Gastrocnemius medialis (tissue), 4 donors: ENCODE measurements at regions of chr16 and their contacts with region 1.

Region 1: DNA sequence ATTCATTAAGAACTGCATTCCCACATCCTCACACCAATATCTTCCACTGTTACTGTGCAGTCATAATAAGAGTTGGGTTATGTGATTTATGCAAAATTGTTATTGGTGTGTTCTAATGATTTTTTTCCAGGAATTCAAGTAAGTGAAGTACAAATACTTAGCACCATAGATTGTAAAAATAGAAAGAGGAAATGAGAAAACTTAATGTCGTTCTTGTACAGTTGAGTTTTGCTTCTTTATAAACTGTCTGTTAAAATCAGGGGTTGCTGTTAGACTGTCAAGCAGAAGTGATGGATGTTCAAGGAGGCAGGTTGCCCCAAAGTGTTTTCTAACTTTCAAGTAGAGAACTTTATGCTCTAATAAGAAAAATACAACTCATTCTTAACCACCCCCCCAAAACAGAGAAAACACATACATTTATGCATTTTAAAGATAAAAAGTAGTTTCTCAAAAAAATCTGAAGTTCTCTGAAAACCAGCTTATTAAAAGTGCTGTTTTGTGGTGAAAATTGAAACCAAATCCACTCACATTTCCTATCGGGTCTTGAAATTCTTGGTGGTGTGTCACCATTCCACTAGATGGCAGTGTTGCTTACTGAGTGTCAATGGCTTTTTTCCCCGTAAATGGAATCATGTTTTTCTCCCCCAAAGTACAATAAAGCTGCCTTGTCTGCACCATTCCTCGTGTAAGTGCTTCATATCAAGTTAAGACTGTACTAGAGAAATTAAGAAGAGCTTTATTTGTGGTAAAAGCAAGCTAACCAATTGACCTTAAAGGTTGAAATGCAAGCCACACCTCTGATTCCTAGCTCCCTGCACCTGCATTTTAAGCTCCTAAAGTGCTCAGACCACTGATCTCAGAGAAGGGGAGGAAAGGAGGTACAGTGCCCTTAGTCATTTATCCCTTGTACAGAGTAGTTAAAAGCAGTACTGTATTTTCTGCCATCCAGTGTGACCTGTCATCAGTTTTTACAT is 4.7 kb upstream of the IGSF6 start:
- DNase-seq: no peak
- ATAC-seq: no peak
- H3K4me3 ChIP-seq: no peak overlapping the region
- H3K27ac ChIP-seq: no peak overlapping the region
- H3K4me1 ChIP-seq: peaks cover 6 to 7% of the 10 kb centered on the region in 2 donors
- H3K27me3 ChIP-seq: no peaks in the 10 kb centered on the region
- CTCF ChIP-seq: peak; percentile 19 to 83 (median 55)
- POLR2A ChIP-seq: no peak

Region 2: DNA sequence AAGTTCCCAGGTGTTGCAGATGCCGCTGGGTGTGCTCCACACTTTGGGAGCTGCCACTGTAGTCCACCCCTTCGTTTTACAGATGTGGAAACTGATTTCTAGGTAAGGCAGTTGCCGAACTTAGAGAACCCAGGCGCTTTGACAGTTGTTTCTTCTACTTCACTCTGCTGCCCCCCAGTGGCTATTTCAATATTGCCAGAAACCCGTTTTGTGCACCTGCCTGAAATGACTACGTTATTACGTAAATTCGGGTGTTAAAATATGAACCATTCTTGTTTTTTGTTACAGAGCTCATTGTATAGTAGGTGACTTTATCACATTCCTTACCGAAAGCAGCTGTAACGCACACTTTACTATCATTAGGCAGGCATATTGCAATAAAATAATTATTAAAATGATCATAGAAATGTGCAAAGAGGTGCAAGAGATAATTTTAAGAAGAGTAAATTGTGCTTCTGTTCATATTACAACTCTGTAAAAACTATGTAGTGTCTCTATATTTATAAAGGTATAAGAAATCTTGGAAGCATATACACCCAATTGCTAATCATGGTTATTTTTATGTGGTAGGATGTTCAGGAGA is 51.5 kb after region 1 on chr16:
- in situ Hi-C with region 1: loop called in 1 of 4 experiments (anchors 5 kb)
- intact Hi-C with region 1: loop called (anchors 2 kb)
- DNase-seq: peak; percentile 34 to 52
- ATAC-seq: peak; percentile 45 to 61
- H3K4me3 ChIP-seq: no peak overlapping the region
- H3K27ac ChIP-seq: no peak overlapping the region
- H3K4me1 ChIP-seq: peaks cover 0 to 7% of the 10 kb centered on the region in 2 donors
- H3K27me3 ChIP-seq: no peaks in the 10 kb centered on the region
- CTCF ChIP-seq: peak; percentile 46 to 85 (median 71)
- POLR2A ChIP-seq: no peak